ENCODE measurements at regions of chr20 and their contacts with region 1.

Region 1: GRCh38 chr20:47150403-47151152 is 205.9 kb downstream of the ZMYND8 start:
- DNase-seq: peak; percentile 94 to 95
- H3K4me3 ChIP-seq: no peak overlapping the region
- H3K4me3 Mint-ChIP-seq: no peak overlapping the region
- H3K27ac Mint-ChIP-seq: peak overlapping the region; percentile 82
- H3K4me1 ChIP-seq: peaks cover 34% of the 10 kb centered on the region
- H3K4me1 Mint-ChIP-seq: peaks cover 39% of the 10 kb centered on the region
- H3K27me3 ChIP-seq: no peaks in the 10 kb centered on the region
- H3K27me3 Mint-ChIP-seq: no peaks in the 10 kb centered on the region
- CTCF ChIP-seq: peak; percentile 91 to 94

Region 2: DNA sequence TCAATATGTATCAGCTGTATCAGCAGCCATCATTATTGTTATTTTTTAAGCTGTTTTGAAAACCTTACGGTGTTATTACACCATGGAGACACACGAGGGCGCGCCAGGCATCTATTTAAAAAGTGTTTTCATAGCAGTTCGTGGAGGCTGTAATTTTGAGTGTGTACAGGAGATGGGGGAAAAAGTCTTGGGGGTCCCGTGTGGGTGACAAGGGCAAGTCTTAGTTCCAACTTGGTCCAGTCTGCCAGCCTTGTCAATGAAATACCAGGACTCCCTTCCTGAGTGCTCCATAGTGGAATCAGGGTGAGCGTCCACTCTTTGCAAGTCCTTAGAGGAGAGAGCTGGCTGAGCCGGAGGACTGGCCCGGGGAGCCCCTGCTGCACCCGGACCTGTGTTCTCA is 397.9 kb before region 1 on chr20:
- CTCF ChIA-PET with region 1: interaction called, 3 read pairs
- POLR2A ChIA-PET with region 1: no interaction called
- intact Hi-C with region 1: loop called (anchors 1 kb)
- DNase-seq: peak; percentile 77 to 81
- H3K4me3 ChIP-seq: no peak overlapping the region
- H3K4me3 Mint-ChIP-seq: no peak overlapping the region
- H3K27ac Mint-ChIP-seq: no peak overlapping the region
- H3K4me1 ChIP-seq: 0 out of 2 replicates have a peak, but pooled peaks cover under 1% of the 10 kb centered on the region
- H3K4me1 Mint-ChIP-seq: peaks cover 7% of the 10 kb centered on the region
- H3K27me3 ChIP-seq: no peaks in the 10 kb centered on the region
- H3K27me3 Mint-ChIP-seq: peaks cover 21% of the 10 kb centered on the region
- CTCF ChIP-seq: peak; percentile 90 to 94

Region 3: DNA sequence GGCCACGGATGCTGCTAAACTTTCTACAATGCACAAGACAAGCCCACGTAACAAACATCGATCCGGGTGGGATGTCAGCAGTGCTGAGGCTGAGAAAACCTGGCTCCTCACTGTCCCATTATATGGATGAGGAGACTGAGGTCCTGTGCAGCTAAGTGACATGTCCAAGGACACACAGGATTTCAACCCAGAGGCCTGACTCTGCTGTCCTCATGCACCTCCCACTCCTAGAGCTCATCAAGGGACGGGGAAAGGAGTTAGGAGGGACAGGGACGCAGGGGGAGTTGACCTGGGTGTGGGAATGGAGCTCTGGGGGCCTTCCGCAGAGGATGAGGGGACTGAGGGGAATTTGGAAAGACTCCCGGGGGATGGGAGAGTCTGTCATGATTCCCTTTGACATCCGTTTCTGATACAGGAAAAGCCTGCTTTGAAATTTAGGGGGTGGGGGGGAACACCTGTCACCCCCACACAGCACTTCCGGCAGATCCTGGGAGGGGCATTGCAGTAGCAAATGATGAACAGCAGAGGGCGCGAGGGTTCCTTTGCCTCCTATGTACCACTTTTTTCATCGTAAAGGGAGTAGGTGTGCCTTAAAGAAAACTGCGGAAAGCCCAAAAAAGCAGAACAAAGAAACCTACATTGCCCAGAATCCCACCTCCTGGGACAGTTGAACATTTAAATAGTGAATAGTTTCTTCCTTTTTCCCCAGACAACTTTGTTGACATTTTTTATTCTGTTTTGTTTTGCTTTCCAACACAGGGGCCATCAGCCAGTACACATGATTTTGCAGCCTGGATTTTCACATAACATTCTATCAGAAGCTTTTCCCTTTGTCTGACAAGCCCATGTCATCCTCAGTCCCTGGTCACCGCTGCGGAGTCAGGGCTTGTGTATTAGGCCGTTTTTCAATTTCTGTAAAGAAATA is 392.6 kb before region 1 on chr20:
- CTCF ChIA-PET with region 1: interaction called, 3 read pairs
- POLR2A ChIA-PET with region 1: no interaction called
- intact Hi-C with region 1: loop called (anchors 1 kb)
- DNase-seq: peak; percentile 80 to 85
- H3K4me3 ChIP-seq: no peak overlapping the region
- H3K4me3 Mint-ChIP-seq: no peak overlapping the region
- H3K27ac Mint-ChIP-seq: no peak overlapping the region
- H3K4me1 ChIP-seq: no peaks in the 10 kb centered on the region
- H3K4me1 Mint-ChIP-seq: peaks cover 7% of the 10 kb centered on the region
- H3K27me3 ChIP-seq: peaks cover 1% of the 10 kb centered on the region; the same call in 1 of the 2 replicates
- H3K27me3 Mint-ChIP-seq: peaks cover 18% of the 10 kb centered on the region
- CTCF ChIP-seq: peak; percentile 99 to 100

Region 4: DNA sequence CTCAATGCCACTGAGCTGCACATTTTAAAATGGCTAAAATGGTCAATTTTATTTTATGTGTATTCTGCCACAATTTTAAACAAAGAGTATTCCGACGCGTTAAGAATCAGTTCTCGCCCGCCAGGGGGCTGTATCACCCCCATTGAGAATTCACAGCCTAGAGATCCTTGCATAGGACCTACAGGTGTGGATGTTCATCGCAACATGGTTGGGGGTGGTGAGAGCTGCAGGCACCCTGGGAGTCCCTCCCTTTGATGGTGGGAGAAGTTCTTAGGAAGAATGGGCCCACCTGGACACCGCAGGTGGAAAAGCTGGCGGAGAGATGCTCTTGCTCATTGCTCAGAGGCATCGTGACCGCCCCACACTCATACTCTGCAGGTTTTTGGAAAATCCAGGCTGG is 377.7 kb before region 1 on chr20:
- CTCF ChIA-PET with region 1: no interaction called
- POLR2A ChIA-PET with region 1: no interaction called
- intact Hi-C with region 1: loop called (anchors 1 kb)
- DNase-seq: peak in 1 of 2 experiments; percentile 64
- H3K4me3 ChIP-seq: no peak overlapping the region
- H3K4me3 Mint-ChIP-seq: no peak overlapping the region
- H3K27ac Mint-ChIP-seq: no peak overlapping the region
- H3K4me1 ChIP-seq: no peaks in the 10 kb centered on the region
- H3K4me1 Mint-ChIP-seq: no peaks in the 10 kb centered on the region
- H3K27me3 ChIP-seq: peaks cover 1% of the 10 kb centered on the region; the same call in 1 of the 2 replicates
- H3K27me3 Mint-ChIP-seq: peaks cover 19% of the 10 kb centered on the region
- CTCF ChIP-seq: peak; percentile 75 to 92

Region 5: GRCh38 chr20:47139857-47140535 is 10.6 kb before region 1 on chr20:
- CTCF ChIA-PET with region 1: interaction called, 6 read pairs
- POLR2A ChIA-PET with region 1: no interaction called
- intact Hi-C with region 1: loop called (anchors 2 kb)
- DNase-seq: peak; percentile 85 to 88
- H3K4me3 ChIP-seq: no peak overlapping the region
- H3K4me3 Mint-ChIP-seq: peak overlapping the region; percentile 34
- H3K27ac Mint-ChIP-seq: peak overlapping the region; percentile 76
- H3K4me1 ChIP-seq: peaks cover 32% of the 10 kb centered on the region
- H3K4me1 Mint-ChIP-seq: peaks cover 47% of the 10 kb centered on the region
- H3K27me3 ChIP-seq: no peaks in the 10 kb centered on the region
- H3K27me3 Mint-ChIP-seq: no peaks in the 10 kb centered on the region
- CTCF ChIP-seq: no peak

Region 6: DNA sequence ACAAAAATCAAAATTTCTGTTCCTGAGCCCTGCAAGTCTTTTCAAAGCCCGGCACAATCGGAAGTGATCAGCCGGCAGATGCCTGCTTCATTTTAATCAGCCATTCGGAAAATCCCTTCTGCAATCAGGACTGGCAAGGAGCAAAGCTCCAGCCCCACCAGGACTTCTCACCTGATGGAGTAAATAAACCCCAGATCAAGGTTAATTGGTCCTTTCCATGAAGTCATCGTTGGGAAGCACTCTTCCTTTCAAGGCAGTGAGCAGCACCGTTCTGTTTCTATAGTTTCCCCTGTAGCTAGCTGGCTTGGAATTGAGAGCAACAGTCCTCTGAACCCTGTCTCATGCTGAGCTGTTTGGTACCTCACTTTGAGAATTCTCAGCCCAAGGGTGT is 20.3 kb after region 1 on chr20:
- CTCF ChIA-PET with region 1: no interaction called
- POLR2A ChIA-PET with region 1: no interaction called
- intact Hi-C with region 1: loop called (anchors 2 kb)
- DNase-seq: no peak
- H3K4me3 ChIP-seq: no peak overlapping the region
- H3K4me3 Mint-ChIP-seq: no peak overlapping the region
- H3K27ac Mint-ChIP-seq: no peak overlapping the region
- H3K4me1 ChIP-seq: no peaks in the 10 kb centered on the region
- H3K4me1 Mint-ChIP-seq: no peaks in the 10 kb centered on the region
- H3K27me3 ChIP-seq: no peaks in the 10 kb centered on the region
- H3K27me3 Mint-ChIP-seq: no peaks in the 10 kb centered on the region
- CTCF ChIP-seq: no peak

Region 7: DNA sequence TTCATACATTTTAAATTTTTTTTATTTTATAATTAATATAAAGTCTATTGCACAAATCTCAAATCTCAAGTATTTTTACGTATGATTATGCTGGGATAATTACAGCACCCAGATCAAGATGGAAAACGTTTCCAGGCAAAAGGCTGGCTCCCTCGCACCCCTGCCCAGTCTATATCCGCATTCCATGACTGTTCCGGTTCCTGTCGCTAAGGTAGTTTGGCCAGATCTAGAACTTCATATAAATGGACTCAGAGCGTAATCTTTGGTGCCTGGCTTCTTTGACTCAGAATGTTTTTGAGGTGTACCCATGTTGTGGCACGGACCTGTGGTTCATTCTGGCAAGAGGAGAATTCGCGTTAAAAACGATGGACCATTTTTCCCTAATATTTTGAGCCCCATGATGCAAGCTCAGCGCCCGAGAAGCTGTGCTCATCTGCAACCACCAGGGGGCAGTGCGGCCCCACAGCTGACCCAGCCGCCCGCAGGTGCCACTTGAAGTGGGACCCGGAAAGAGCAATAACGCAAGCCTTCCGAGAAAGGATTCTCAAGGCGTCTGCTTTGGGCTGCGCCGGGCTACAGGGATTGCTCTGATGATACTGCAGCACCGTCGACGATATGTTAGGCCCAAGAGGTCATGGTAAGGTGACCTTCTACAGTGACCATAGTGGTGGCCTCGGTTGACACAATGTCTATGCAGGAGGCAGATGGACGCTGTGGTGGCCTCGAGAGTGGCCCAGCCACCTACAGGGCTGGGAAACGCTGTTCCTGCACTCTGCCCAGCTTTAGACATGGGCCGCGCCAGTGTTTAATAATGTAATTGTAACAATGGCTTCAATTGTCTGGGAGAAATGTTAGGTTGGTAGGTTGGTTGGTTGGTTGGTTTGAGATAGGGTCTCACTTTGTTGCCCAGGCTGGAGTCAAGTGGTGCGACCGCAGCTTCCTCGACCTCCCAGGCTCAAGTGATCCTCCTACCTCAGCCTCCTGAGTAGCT is 45.8 kb after region 1 on chr20:
- CTCF ChIA-PET with region 1: interaction called, 6 read pairs
- POLR2A ChIA-PET with region 1: no interaction called
- intact Hi-C with region 1: loop called (anchors 1 kb)
- DNase-seq: peak; percentile 90 to 95
- H3K4me3 ChIP-seq: no peak overlapping the region
- H3K4me3 Mint-ChIP-seq: peak overlapping the region; percentile 1
- H3K27ac Mint-ChIP-seq: peak overlapping the region; percentile 44
- H3K4me1 ChIP-seq: peaks cover 25% of the 10 kb centered on the region
- H3K4me1 Mint-ChIP-seq: peaks cover 27% of the 10 kb centered on the region
- H3K27me3 ChIP-seq: no peaks in the 10 kb centered on the region
- H3K27me3 Mint-ChIP-seq: no peaks in the 10 kb centered on the region
- CTCF ChIP-seq: peak; percentile 100